ENCODE measurements at regions of chr5 and their contacts with region 1.

Region 1: DNA sequence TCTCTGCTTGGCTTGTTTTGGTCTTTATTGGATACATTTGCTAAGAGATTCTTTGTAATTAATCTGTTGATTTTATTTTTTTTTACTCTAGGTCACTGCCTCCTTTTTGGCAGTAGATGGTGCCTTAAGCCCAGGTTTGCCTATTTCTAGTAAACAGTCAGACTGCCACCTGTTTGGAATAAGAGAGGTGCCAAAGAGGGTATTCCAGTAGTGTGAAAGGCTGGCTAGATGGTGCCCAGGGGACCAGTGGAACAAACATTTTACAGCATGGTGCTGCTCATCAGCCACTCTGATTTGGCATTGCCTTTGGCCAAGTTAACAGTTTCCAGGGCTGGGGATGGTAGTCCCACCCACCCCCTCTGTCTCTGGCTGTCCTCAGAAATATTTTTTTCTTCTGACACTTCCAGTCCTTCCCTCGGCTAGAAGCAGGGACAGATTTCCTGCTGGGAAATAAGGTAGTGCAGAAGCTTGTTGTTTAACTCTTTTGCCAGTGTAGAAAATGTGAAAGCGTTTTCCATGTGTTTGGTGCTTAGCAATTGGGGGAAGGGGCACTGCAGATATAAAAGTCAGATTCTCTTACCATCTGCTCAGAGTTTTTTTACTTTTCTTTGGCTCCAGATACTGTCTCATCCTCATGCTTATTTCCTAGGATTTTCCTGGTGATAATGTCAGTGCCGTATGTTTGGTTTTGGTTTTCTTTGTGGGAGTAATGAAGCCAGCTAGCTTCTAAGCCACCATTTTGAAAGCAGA is 36.6 kb upstream of the FBXL7 start:
- DNase-seq: peak; percentile 6
- H3K4me3 ChIP-seq: no peak overlapping the region
- CTCF ChIP-seq: peak; percentile 51

Region 2: GRCh38 chr5:15510831-15511230 is 47.4 kb after region 1 on chr5:
- in situ Hi-C with region 1: no loop called
- DNase-seq: no peak
- H3K4me3 ChIP-seq: no peak overlapping the region
- CTCF ChIP-seq: no peak

Region 3: DNA sequence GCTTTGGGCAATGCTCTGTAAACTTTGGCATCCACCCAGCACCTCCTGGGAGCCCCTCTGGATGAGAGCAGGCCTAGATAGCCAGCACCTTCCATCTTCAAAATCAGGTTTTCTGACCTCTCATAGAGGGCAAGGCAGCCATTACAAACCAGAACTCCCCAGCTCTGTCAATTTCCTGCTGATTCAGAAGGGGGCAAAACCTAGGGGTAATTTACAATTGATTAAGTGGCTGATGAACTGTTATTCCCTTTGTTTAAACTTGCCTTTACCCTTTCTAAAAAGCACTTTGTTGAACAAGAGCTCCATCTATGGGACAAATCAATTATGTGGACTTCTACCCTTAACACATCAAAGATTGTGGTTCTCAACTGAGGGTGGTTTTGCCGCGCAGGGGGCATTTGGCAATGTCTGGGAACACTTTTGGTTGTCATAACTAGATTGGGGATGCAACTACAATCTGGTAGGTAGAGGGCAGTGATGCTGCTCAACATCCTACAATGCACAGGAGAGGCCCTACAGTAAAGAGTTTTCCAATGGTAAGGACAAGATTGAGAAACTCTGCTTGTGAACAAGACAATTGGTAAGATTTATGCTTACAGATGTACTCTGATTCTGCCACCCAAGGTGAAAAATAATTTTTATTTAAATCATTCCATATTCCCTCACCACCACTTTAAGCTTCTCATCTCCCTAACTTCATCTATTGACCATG is 532.1 kb after region 1 on chr5:
- in situ Hi-C with region 1: loop called (anchors 25 kb)
- DNase-seq: peak; percentile 45
- H3K4me3 ChIP-seq: no peak overlapping the region
- CTCF ChIP-seq: peak; percentile 65